ENCODE measurements at regions of chr4 and their contacts with region 1.

Region 1: DNA sequence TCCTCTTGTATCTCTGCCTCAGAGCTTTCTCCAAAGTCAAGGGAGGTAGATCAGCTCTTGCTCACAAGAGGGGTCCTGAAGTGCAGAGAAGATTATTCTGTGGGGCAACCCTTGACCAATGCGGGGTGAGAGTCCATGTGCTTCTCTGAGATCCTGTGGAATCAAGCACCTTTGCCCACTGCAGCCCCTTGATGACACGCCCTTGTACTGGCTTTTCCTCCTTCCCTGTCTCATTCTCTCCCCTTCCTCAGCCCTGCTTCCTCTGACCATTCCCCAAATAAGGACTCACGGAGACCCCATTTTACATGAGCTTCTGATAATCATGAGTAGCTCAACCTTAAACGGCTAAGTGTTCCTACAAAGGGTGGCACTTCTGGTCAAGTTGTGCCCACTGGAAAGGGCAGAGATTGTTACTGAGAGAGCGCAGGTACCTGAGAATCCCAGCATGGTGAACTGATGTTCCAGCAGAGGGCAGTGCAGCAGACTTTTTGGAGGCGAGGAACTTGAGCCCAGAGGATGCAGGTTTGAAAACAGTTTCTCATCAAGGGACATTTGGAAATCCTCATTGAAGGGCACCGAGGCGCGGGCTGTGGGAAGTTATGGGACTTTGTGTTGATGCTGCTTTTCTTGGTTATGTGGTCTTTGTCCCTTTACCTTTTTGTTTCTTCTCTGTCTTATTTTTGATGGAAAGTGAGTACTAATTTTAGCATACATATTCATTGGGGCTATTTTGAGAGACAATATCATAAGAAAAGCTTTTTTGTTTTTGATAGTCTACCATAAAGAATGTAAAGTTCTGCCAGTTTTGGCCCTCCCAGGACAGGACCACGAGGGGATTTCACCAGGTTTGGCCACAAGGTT is 201.3 kb downstream of the RBM46 start:
- DNase-seq: peak; percentile 62
- ATAC-seq: peak; percentile 62

Region 2: GRCh38 chr4:154928640-154929257 is 53.7 kb before region 1 on chr4:
- intact Hi-C with region 1: no loop called
- DNase-seq: no peak
- ATAC-seq: no peak

Region 3: DNA sequence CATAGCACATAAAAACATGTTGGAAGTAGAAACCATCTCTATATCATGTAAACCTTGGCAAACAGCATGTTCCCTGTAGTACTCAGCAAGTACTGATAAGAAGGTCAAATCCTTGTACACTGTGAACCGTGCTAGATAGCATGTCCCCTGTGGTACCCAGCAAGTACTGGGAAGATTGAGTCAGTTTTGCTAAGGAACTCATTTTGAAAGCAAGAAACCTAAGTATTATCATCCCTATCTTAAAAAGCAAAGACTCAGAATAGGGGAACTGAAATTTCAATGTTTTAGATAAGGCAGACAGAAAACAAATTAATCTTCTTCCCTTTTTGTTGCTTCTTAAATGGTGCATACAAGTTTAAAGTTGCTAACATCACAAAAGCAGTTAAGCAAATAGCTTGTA is 21.2 kb before region 1 on chr4:
- intact Hi-C with region 1: loop called (anchors 1 kb)
- DNase-seq: no peak
- ATAC-seq: no peak

Region 4: DNA sequence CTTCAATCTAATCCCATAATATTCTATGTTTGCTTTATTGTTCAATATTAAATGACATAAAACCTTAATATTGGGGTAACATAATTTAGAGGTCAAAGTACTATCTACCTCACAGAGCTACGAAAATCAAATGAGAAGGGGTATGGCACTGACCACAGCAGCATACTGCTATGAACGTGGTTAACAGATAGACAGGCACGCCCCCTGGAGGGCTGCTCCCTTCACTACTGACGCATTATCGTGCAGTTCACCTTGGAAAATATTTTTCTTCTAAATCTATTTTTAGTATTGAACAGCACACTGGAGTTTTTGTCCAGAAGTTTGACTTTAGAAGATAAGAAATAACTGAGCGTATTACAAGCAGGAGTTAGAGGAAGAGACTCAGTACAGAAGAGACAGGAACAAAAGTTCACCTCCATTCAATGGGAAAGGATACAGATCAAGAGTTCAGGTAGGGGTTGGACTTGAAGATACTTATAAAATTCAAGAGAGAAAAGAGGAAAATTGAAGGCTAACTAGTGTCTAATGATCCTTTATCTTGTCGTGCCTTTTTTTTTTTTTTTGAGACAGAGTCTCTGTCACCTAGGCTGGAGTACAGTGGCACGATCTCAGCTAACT is 371.6 kb after region 1 on chr4:
- intact Hi-C with region 1: loop called (anchors 10 kb)
- DNase-seq: peak; percentile 75
- ATAC-seq: peak; percentile 78

Region 5: GRCh38 chr4:156303708-156304107 is 1321.3 kb after region 1 on chr4:
- intact Hi-C with region 1: no loop called
- DNase-seq: no peak
- ATAC-seq: no peak